ENCODE measurements at regions of chr17 and their contacts with region 1.

Region 1: DNA sequence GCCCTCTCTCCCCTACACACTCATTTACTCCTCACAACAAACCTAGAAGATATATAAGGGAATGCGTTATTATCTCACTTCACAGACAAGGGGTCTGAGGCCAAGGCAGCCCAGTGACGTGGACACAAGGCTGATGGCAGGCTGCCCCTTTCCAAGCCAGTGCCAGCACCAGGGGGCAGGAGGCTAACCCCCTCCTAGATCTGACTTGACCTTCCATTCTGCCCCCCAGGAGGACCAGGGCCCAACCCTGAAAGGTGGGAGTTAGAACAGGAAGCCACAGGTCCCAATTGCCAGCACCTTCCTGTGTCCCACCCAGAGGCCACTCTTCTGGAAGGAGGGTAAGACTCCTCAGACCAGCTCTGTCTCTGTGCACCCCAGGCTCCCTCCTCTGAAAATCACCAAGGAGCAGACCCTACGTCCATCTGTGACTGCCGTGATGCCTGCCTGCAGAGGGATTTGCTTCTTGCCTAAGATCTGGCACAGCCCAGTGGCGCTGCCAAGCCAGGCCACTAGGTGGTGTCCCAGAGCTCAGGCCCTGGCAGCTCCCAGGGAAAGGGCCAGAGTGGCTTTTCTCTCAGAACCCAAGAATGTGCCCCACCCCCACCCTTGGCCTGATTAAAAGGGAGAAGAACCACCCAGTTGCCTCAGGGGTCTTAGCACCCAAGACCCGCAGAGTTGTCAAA is 42.4 kb upstream of the MRPS23 start:
- DNase-seq: peak; percentile 94
- ATAC-seq: peak; percentile 52

Region 2: DNA sequence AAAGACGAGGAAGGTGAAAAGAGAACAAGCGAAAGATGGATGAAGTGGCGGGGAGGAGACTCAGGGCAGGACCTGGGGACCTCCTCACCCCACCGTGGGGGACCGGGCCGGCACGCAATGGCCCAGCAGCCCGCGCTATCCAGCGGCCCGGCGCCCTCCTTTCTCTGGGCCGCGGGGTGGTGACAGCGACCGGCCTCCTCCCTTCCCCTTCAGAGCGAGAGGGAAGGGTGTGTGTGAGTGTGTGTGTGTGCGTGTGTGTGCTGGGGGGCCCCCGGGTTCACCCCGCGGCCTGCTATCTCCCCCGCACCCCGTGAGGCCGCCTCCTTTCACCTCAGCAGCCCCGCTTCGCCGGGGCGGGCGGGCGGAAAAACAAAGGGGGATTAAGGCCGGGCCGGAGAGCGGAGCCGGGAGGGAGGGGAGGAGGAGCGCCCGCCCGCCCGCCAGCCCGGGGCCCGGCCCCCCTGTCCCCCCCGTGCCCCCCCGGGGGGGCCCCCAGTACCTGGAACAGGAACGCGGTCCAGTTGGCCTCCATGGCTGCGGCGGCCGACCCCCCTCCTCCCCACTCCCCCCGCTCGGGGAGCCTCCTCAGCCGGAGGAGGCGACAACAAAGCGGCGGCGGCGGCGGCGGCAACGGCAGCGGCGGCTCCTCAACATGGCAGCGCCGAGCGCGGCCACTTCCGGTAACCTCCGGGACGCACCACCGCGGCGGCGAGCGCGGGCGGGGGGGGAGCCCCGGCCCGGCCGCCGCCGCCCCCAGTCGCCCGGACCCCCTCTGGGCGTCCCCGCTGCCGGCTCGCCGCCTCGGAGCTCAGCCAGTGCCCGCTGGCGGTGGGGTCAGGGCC is 95.5 kb after region 1 on chr17 and contains the start of gene VEZF1:
- intact Hi-C with region 1: loop called (anchors 5 kb)
- DNase-seq: peak; percentile 90
- ATAC-seq: peak; percentile 76
- total RNA-seq, gene VEZF1: 73.7 TPM